Heart left ventricle (tissue), 16 donors: ENCODE measurements at regions of chr6 and their contacts with region 1.

Region 1: GRCh38 chr6:131949909-131950766 is 1.0 kb downstream of the CCN2 start:
- DNase-seq: peak; percentile 71 to 80 (median 78)
- ATAC-seq: peak; percentile 35 to 71 (median 59)
- H3K4me3 ChIP-seq: peak overlapping the region; percentile 43 to 88 (median 69)
- H3K27ac ChIP-seq: peak overlapping the region; percentile 77 to 98 (median 92)
- H3K4me1 ChIP-seq: peaks cover 0 to 37% (median 14%) of the 10 kb centered on the region in 12 donors
- H3K27me3 ChIP-seq: peaks cover 0 to 21% (median 0%) of the 10 kb centered on the region in 9 donors
- CTCF ChIP-seq: peak; percentile 27 to 66 (median 46)
- POLR2A ChIP-seq: no peak

Region 2: GRCh38 chr6:131400054-131400781 is 549.9 kb before region 1 on chr6:
- intact Hi-C with region 1: no loop called
- DNase-seq: no peak
- ATAC-seq: no peak
- H3K4me3 ChIP-seq: no peak overlapping the region
- H3K27ac ChIP-seq: no peak overlapping the region
- H3K4me1 ChIP-seq: no peaks in the 10 kb centered on the region
- H3K27me3 ChIP-seq: no peaks in the 10 kb centered on the region
- CTCF ChIP-seq: no peak
- POLR2A ChIP-seq: no peak

Region 3: DNA sequence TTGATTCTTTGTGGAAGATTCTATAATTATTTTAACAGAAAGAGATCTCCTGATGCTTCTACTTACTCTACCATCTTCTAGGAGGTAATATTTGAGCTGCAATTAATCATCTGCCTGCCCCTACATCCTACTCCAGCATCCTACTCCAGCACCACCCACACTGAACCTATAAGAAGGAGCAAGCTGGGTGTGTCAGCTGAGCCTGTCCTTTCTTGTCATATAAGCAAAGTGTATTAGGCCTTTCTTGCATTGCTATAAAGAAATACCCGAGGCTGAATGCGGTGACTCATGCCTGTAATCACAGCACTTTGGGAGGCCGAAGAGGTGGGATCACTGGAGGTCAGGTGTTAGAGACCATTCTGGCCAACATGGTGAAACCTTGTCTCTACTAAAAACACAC is 461.4 kb before region 1 on chr6:
- intact Hi-C with region 1: no loop called
- DNase-seq: no peak
- ATAC-seq: no peak
- H3K4me3 ChIP-seq: no peak overlapping the region
- H3K27ac ChIP-seq: no peak overlapping the region
- H3K4me1 ChIP-seq: no peaks in the 10 kb centered on the region
- H3K27me3 ChIP-seq: no peaks in the 10 kb centered on the region
- CTCF ChIP-seq: no peak
- POLR2A ChIP-seq: no peak

Region 4: GRCh38 chr6:131979515-131980337 is 29.6 kb after region 1 on chr6:
- intact Hi-C with region 1: no loop called
- DNase-seq: no peak
- ATAC-seq: no peak
- H3K4me3 ChIP-seq: no peak overlapping the region
- H3K27ac ChIP-seq: no peak overlapping the region
- H3K4me1 ChIP-seq: peaks cover 0 to 40% (median 4%) of the 10 kb centered on the region in 12 donors
- H3K27me3 ChIP-seq: no peaks in the 10 kb centered on the region
- CTCF ChIP-seq: no peak
- POLR2A ChIP-seq: no peak

Region 5: DNA sequence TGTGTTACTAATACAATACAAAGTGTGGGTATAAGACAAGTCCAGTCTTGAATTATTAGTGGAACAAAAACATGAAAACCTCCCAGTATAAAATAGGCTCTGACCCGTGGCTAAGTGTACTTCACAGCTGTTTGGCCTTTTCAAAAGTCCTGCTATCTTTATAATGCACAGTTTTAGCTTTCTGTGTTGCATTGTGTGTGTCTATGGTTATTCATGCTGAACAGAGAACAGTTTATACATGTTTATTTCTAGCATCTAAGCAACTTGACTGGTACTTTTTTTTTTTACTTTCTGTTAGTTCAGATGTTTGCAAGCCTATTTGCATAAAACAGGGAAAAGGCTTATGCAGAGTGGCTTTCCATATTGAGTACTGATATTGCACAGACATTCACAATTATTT is 120.2 kb after region 1 on chr6:
- intact Hi-C with region 1: loop called in 1 of 10 experiments (anchors 10 kb)
- DNase-seq: no peak
- ATAC-seq: peak in 1 of 4 donors; percentile 64
- H3K4me3 ChIP-seq: no peak overlapping the region
- H3K27ac ChIP-seq: no peak overlapping the region
- H3K4me1 ChIP-seq: no peaks in the 10 kb centered on the region
- H3K27me3 ChIP-seq: no peaks in the 10 kb centered on the region
- CTCF ChIP-seq: no peak
- POLR2A ChIP-seq: no peak

Region 6: GRCh38 chr6:132131758-132132157 is 181.6 kb after region 1 on chr6:
- intact Hi-C with region 1: loop called in 1 of 10 experiments (anchors 10 kb)
- DNase-seq: peak in 4 of 5 donors; percentile 47 to 69 (median 57)
- ATAC-seq: peak; percentile 86 to 93 (median 90)
- H3K4me3 ChIP-seq: no peak overlapping the region
- H3K27ac ChIP-seq: peak overlapping the region; percentile 61 to 96 (median 83)
- H3K4me1 ChIP-seq: peaks cover 0 to 41% (median 34%) of the 10 kb centered on the region in 12 donors
- H3K27me3 ChIP-seq: no peaks in the 10 kb centered on the region
- CTCF ChIP-seq: no peak
- POLR2A ChIP-seq: no peak

Region 7: DNA sequence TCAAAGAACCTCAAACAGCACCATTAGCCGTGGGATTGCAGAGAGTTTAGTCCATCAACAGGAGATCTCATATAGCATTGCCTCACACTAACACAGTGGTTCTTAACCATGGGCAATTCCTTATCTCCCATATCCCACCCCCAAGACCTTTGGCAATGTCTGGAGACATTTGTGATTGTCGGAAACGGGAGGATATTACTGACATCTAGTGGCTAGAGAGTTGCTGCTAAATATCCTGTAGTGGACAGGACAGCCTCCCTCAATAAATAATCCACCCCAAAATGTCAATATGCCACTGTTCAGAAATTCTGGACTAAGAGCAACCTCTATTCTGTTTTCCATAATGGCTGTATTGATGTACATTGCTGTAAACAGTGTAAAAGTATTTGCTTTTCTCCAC is 211.1 kb after region 1 on chr6:
- intact Hi-C with region 1: loop called in 5 of 10 experiments (anchors 2 to 10 kb)
- DNase-seq: no peak
- ATAC-seq: peak in 1 of 4 donors; percentile 74
- H3K4me3 ChIP-seq: no peak overlapping the region
- H3K27ac ChIP-seq: no peak overlapping the region
- H3K4me1 ChIP-seq: no peaks in the 10 kb centered on the region
- H3K27me3 ChIP-seq: no peaks in the 10 kb centered on the region
- CTCF ChIP-seq: peak; percentile 37 to 76 (median 59)
- POLR2A ChIP-seq: no peak

Region 8: GRCh38 chr6:132209351-132209750 is 259.2 kb after region 1 on chr6:
- intact Hi-C with region 1: loop called in 5 of 10 experiments (anchors 5 to 10 kb)
- DNase-seq: no peak
- ATAC-seq: no peak
- H3K4me3 ChIP-seq: no peak overlapping the region
- H3K27ac ChIP-seq: no peak overlapping the region
- H3K4me1 ChIP-seq: no peaks in the 10 kb centered on the region
- H3K27me3 ChIP-seq: no peaks in the 10 kb centered on the region
- CTCF ChIP-seq: no peak
- POLR2A ChIP-seq: no peak

Region 9: DNA sequence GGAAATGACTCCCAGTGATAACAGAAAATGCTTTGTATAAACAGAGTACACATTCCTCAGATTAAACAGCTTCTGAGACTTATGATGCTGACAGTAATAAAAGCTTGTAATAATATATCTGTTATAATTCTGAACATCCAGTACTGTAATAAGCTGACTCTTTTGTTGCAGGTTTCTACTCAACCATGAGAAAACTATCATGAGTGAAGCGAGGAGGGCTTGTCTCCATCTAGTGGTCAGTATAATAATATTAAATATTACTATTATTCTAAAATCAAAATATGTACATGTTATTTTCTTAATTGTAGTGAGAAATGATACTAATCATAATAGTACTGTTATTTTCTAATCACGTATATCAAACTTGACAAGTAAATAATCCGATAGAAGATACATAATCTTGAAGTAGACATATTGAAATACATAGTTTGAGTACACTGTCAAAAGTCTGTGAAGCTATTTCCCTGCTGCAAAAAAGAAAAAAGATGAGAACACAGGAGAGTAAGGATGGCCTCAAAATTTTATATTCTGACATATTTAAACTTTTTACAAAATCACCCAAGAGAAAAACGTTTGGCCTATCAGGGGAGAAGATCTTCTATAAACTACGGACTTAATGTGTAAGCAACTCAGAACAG is 268.0 kb after region 1 on chr6:
- intact Hi-C with region 1: loop called in 4 of 10 experiments (anchors 10 kb)
- DNase-seq: no peak
- ATAC-seq: peak in 2 of 4 donors; percentile 39 to 42
- H3K4me3 ChIP-seq: no peak overlapping the region
- H3K27ac ChIP-seq: peak overlapping the region in 2 of 12 donors; percentile 7 to 22
- H3K4me1 ChIP-seq: peaks cover 0 to 6% (median 0%) of the 10 kb centered on the region in 12 donors
- H3K27me3 ChIP-seq: peaks cover 0 to 3% (median 0%) of the 10 kb centered on the region in 9 donors
- CTCF ChIP-seq: peak; percentile 43 to 79 (median 58)
- POLR2A ChIP-seq: no peak